SK-N-SH (cell line): ENCODE measurements at regions of chr7 and their contacts with region 1.

Region 1: GRCh38 chr7:45259966-45260646 is 102.5 kb downstream of the RAMP3 start:
- DNase-seq: peak; percentile 86
- H3K4me3 ChIP-seq: peak overlapping the region in 1 of 2 experiments; percentile 20; a peak in 1 of 4 replicates
- H3K27ac ChIP-seq: no peak overlapping the region
- H3K4me1 ChIP-seq: peaks cover 0 to 11% of the 10 kb centered on the region in 2 experiments; a peak in 1 of 4 replicates
- H3K27me3 ChIP-seq: peaks cover 13% of the 10 kb centered on the region; the same call in 1 of the 2 replicates
- CTCF ChIP-seq: peak; percentile 100
- EP300 ChIP-seq: no peak
- RAD21 ChIP-seq: peak; percentile 88

Region 2: DNA sequence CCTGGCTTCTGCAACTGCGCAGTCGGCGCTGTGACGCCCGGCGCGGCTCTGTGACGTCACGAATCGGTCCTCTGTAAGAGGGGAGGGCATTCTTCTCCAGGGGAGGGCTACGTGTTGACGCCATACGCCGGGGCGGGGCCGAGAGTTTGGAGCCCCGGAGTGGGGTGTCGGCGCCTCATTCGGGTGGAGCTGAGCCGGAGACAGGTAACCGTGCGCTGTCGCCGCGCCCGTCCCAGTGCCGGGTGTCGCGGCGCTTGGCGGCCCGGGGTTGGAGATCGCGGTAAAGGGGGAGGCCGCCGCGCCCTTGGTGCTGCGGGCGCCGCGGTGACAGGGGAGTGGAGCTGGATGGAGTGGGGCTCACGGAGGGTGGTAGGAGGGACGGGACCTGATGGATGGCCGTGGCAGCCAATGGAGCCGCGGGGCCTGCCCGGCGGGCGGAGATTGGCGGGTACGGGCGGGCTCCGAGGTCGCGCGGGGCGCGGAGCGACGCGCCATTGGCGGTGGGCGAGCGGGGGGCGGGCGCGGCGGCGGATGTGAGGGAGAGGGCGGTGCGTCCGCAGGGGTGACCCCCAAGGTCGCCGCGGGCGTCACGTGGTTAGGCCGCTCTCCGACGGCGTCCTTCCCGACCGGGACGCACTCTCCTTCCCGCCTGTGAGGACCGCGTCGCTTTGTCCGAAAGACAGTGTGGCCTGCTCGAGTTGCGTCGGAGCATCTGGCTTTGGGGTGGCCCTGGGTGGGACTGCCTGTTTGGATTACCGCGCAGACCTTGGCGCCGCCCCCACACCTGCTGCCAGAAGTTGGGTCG is 653.5 kb before region 1 on chr7 and contains the start of gene OGDH:
- CTCF ChIA-PET with region 1: no interaction called
- POLR2A ChIA-PET with region 1: no interaction called
- DNase-seq: peak; percentile 100
- H3K4me3 ChIP-seq: peak within 1 kb of the TSS; percentile 62 to 87
- H3K27ac ChIP-seq: peak within 1 kb of the TSS; percentile 76 to 89
- H3K4me1 ChIP-seq: peaks cover 0 to 5% of the 10 kb centered on the region in 2 experiments; a peak in 2 of 4 replicates
- H3K27me3 ChIP-seq: no peaks in the 10 kb centered on the region
- CTCF ChIP-seq: no peak
- EP300 ChIP-seq: 0 out of 4 replicates have a peak, but pooled peaks of 1 of the 2 experiments have one; percentile 8
- RAD21 ChIP-seq: no peak
- polyA plus RNA-seq, gene OGDH: 58.2 and 69.4 TPM in 2 replicates

Region 3: GRCh38 chr7:45171946-45172345 is 88.2 kb before region 1 on chr7:
- CTCF ChIA-PET with region 1: interaction called, 15 read pairs
- POLR2A ChIA-PET with region 1: no interaction called
- DNase-seq: no peak
- H3K4me3 ChIP-seq: no peak overlapping the region
- H3K27ac ChIP-seq: no peak overlapping the region
- H3K4me1 ChIP-seq: no peaks in the 10 kb centered on the region
- H3K27me3 ChIP-seq: 0 out of 2 replicates have a peak, but pooled peaks cover 23% of the 10 kb centered on the region
- CTCF ChIP-seq: no peak
- EP300 ChIP-seq: no peak
- RAD21 ChIP-seq: no peak

Region 4: GRCh38 chr7:45217358-45217757 is 42.7 kb before region 1 on chr7:
- CTCF ChIA-PET with region 1: interaction called, 43 read pairs
- POLR2A ChIA-PET with region 1: no interaction called
- DNase-seq: peak; percentile 65
- H3K4me3 ChIP-seq: no peak overlapping the region
- H3K27ac ChIP-seq: no peak overlapping the region
- H3K4me1 ChIP-seq: peaks cover 0 to 36% of the 10 kb centered on the region in 2 experiments; a peak in 1 of 4 replicates
- H3K27me3 ChIP-seq: peaks cover 32% of the 10 kb centered on the region
- CTCF ChIP-seq: peak; percentile 41
- EP300 ChIP-seq: no peak
- RAD21 ChIP-seq: peak; percentile 53

Region 5: GRCh38 chr7:45246354-45246753 is 13.8 kb before region 1 on chr7:
- CTCF ChIA-PET with region 1: interaction called, 30 read pairs
- POLR2A ChIA-PET with region 1: no interaction called
- DNase-seq: no peak
- H3K4me3 ChIP-seq: no peak overlapping the region
- H3K27ac ChIP-seq: no peak overlapping the region
- H3K4me1 ChIP-seq: no peaks in the 10 kb centered on the region
- H3K27me3 ChIP-seq: peaks cover 6% of the 10 kb centered on the region; the same call in 1 of the 2 replicates
- CTCF ChIP-seq: no peak
- EP300 ChIP-seq: no peak
- RAD21 ChIP-seq: no peak

Region 6: DNA sequence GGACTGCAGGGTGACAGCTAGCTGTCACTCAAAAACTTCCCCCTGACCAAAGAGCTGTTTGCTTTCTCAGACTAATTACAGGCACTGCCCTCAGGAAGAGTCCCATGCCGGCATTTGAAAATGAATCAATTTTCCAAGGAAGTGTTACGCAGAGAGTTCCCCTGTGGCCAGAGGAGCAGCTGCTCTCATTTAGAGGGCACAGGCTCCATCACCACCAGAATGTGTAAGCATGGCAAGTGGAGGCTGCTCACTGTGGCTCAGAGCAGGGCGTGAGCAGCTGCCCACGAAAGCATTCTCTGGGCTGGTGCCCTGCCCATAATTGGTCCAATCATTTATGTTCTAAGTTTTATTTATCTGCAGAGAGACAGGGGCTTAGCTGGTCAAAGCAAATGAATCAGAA is 99.7 kb after region 1 on chr7:
- CTCF ChIA-PET with region 1: interaction called, 11 read pairs
- POLR2A ChIA-PET with region 1: no interaction called
- DNase-seq: no peak
- H3K4me3 ChIP-seq: no peak overlapping the region
- H3K27ac ChIP-seq: no peak overlapping the region
- H3K4me1 ChIP-seq: peaks cover 0 to 22% of the 10 kb centered on the region in 2 experiments; a peak in 2 of 4 replicates
- H3K27me3 ChIP-seq: no peaks in the 10 kb centered on the region
- CTCF ChIP-seq: no peak
- EP300 ChIP-seq: no peak
- RAD21 ChIP-seq: no peak

Region 7: DNA sequence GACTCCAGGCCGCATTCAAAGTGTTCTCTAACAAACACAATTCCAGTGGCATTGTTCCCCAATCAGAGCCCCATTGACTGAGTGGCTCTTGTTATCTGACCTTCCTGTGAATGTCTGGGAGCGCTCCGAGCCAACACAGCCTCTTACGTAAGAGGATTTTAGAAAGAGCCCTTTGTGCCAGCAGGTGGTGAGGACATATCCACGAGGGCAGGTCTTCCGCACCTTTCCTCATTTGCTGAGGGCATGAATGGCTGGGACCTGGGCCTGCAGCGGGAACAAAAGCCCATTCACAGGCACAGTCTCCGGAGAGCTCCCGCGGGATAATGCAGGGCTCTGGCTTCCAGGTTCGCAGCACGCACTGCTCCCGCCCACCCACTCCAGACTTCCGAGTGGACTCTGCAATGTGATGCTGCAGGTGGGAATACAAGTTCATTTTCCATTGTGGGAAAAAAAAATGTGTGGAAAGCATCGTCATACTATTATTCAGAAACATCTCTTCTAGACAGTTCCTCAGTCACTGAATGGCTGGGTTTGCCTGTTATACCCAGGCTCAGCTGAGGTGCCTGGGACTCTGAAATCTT is 956.0 kb after region 1 on chr7:
- CTCF ChIA-PET with region 1: no interaction called
- POLR2A ChIA-PET with region 1: no interaction called
- DNase-seq: no peak
- H3K4me3 ChIP-seq: no peak overlapping the region
- H3K27ac ChIP-seq: no peak overlapping the region
- H3K4me1 ChIP-seq: no peaks in the 10 kb centered on the region
- H3K27me3 ChIP-seq: no peaks in the 10 kb centered on the region
- CTCF ChIP-seq: no peak
- EP300 ChIP-seq: no peak
- RAD21 ChIP-seq: no peak